PC-9 (cell line): ENCODE measurements at regions of chr14 and their contacts with region 1.

Region 1: GRCh38 chr14:76947078-76947837 is 81.2 kb downstream of the IRF2BPL start:
- DNase-seq: peak; percentile 95 to 100
- H3K4me3 ChIP-seq: peak overlapping the region; percentile 15; the same call in 1 of the 2 replicates
- H3K27ac ChIP-seq: peak overlapping the region; percentile 93
- H3K4me1 ChIP-seq: peaks cover 81% of the 10 kb centered on the region
- H3K27me3 ChIP-seq: no peaks in the 10 kb centered on the region
- CTCF ChIP-seq: peak; percentile 59; the same call in 1 of the 2 replicates

Region 2: DNA sequence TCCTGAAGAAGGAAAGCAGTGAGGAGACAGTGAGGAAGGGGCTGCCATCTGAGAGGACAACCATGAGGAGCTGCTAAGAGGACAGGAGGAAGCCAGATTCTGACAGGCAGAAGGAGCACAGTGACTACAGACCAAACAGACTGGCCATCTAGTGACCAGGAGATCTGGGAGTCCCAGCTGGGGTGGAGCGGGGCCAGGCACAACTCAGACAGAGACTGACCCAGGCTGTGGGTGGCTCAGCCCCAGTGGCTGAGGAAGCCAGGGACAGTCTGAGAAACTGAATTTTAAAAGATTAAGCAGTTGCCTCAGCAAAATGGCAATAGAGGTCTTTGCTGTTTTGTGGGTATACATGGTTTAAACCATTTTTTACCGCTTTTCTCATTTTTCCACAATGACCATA is 92.2 kb before region 1 on chr14:
- CTCF ChIA-PET with region 1: no interaction called
- POLR2A ChIA-PET with region 1: no interaction called
- intact Hi-C with region 1: no loop called
- DNase-seq: no peak
- H3K4me3 ChIP-seq: no peak overlapping the region
- H3K27ac ChIP-seq: no peak overlapping the region
- H3K4me1 ChIP-seq: no peaks in the 10 kb centered on the region
- H3K27me3 ChIP-seq: peaks cover 89% of the 10 kb centered on the region
- CTCF ChIP-seq: no peak

Region 3: DNA sequence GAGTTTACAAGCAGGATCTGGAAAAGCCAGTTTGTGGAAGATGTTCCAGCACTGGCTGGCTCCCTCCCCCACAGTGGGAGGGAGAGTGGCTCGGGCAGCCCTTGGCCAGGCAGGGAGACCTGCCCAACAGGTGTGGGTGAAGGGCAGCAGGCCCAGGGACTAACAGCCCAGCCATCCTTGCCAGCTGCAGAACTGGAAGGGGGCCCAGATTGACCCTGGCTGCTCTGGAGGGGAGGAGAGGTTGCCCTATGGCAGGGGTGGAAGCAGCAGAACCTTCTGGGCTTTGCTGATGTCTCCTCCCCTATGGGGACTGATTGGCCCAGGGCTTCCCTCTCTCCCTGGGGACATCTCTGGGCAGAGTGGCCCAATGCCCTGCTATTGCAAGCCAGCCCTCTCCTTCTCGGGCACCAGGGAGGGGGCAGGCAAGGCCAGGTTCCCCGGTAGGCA is 60.7 kb after region 1 on chr14:
- CTCF ChIA-PET with region 1: interaction called, 8 read pairs
- POLR2A ChIA-PET with region 1: no interaction called
- intact Hi-C with region 1: loop called (anchors 1 kb)
- DNase-seq: peak; percentile 95 to 99
- H3K4me3 ChIP-seq: peak overlapping the region; percentile 33; the same call in 1 of the 2 replicates
- H3K27ac ChIP-seq: peak overlapping the region; percentile 77
- H3K4me1 ChIP-seq: peaks cover 89% of the 10 kb centered on the region
- H3K27me3 ChIP-seq: no peaks in the 10 kb centered on the region
- CTCF ChIP-seq: no peak

Region 4: DNA sequence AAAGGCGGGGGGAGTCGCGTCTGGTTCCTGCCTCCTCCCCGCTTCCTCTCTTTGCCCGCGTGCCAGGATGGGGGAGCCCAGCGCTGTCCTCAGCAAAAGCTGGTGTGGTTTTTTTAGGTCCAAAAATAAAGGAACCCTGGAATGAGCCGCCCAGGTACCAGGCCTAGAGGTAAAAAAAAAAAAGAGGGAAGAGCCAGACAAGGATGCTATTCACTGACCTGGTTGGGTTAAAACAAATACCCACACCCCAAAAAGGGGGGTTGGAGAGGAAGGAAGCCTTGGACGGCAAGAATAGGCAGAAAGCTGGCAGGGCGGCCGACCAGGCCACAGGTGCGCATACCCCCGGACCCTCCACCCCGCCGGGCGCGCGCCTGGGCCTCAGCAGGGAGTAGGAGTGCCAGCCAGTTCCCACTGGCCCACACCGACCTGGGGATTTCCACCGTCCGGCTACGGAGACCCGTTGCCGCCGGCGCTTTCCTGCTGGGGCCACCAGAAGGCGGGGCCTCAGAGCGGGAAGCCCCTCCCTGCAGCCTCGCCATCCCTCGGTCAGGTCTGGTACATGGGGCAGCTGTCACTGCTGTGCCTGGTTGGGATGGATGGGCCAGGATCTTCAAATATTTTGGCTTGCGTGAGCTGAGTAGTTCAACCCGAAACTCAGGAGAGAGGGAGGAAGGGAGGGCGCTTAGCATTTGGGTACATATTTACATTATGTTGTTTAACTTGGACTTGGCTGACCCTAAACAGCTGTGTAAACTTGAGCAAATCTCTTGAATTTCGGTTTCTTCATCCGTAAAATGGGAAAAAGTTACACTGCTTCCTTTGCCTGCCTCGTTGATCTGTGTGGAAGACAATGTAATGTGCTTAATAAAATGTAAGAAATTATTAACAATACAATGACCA is 86.6 kb after region 1 on chr14:
- CTCF ChIA-PET with region 1: interaction called, 11 read pairs
- POLR2A ChIA-PET with region 1: interaction called, 11 read pairs
- intact Hi-C with region 1: no loop called
- DNase-seq: peak; percentile 94
- H3K4me3 ChIP-seq: peak overlapping the region; percentile 56
- H3K27ac ChIP-seq: peak overlapping the region; percentile 93
- H3K4me1 ChIP-seq: peaks cover 92% of the 10 kb centered on the region
- H3K27me3 ChIP-seq: no peaks in the 10 kb centered on the region
- CTCF ChIP-seq: peak; percentile 17; the same call in 1 of the 2 replicates

Region 5: GRCh38 chr14:77040059-77040740 is 92.9 kb after region 1 on chr14:
- CTCF ChIA-PET with region 1: interaction called, 7 read pairs
- POLR2A ChIA-PET with region 1: interaction called, 4 read pairs
- intact Hi-C with region 1: loop called (anchors 1 kb)
- DNase-seq: peak; percentile 99
- H3K4me3 ChIP-seq: peak overlapping the region; percentile 41
- H3K27ac ChIP-seq: peak overlapping the region; percentile 85
- H3K4me1 ChIP-seq: peaks cover 95% of the 10 kb centered on the region
- H3K27me3 ChIP-seq: no peaks in the 10 kb centered on the region
- CTCF ChIP-seq: no peak